Gastrocnemius medialis (tissue), 4 donors: ENCODE measurements at regions of chr16 and their contacts with region 1.

Region 1: GRCh38 chr16:49811644-49812334 is 44.1 kb downstream of the ZNF423 start:
- DNase-seq: peak; percentile 52 to 83
- ATAC-seq: peak; percentile 83 to 85
- H3K4me3 ChIP-seq: peak overlapping the region in 1 of 4 donors; percentile 24
- H3K27ac ChIP-seq: peak overlapping the region; percentile 69 to 97 (median 80)
- H3K4me1 ChIP-seq: peaks cover 64 to 73% of the 10 kb centered on the region in 2 donors
- H3K27me3 ChIP-seq: no peaks in the 10 kb centered on the region
- CTCF ChIP-seq: no peak
- POLR2A ChIP-seq: peak in 1 of 2 donors; percentile 21

Region 2: DNA sequence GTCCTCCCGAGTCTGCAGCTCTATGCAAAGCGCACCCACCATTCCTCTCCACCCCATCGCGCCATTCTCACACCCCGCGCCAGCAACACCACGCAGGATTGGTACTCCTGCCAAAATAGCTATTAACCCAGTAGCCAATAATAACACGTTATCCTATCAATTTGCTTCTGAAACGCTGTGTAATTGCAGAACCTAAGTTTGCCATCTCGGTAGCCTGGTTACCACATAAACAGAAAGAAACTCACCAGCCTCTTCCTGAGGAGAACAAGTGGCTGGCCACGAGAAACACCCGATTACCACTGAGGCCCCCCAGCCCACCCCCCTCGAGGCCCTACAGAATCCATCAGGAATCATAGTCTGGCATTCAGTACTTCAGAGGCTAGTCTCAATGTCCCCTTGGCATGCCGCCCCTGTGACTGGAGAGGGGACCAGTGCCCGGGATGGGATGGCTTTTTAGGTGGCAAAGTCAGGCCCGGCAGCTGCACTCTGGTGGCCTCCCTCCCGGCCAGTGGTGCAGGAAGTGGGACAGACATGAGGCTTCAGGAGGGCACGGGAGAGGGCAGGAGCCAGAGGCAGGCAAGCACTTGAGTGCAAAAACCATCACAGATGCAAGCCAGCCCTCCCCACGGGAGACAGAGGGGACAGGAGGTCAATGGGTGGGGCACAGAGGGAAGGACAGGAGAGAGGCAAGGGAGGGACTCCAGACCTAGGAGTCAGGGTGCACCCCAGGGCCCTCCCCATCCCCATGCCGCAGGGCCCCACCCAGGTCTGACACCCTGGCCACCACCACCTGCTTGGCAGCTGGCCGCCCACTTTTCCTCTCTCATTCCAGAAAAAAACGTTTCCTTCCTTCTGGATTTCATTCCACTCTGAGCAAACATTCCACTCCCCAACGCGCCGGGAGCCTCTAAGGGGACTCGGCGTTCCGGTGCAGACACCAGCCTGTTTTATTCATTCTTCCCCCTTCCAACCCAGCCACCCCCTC is 148.4 kb before region 1 on chr16:
- in situ Hi-C with region 1: no loop called
- intact Hi-C with region 1: loop called (anchors 5 kb)
- DNase-seq: peak in 1 of 2 donors; percentile 31
- ATAC-seq: no peak
- H3K4me3 ChIP-seq: peak overlapping the region; percentile 12 to 26 (median 18)
- H3K27ac ChIP-seq: peak overlapping the region; percentile 47 to 75 (median 62)
- H3K4me1 ChIP-seq: peaks cover 35 to 36% of the 10 kb centered on the region in 2 donors
- H3K27me3 ChIP-seq: no peaks in the 10 kb centered on the region
- CTCF ChIP-seq: no peak
- POLR2A ChIP-seq: no peak

Region 3: GRCh38 chr16:49899991-49900695 is 88.4 kb after region 1 on chr16:
- in situ Hi-C with region 1: no loop called
- intact Hi-C with region 1: no loop called
- DNase-seq: no peak
- ATAC-seq: no peak
- H3K4me3 ChIP-seq: no peak overlapping the region
- H3K27ac ChIP-seq: no peak overlapping the region
- H3K4me1 ChIP-seq: no peaks in the 10 kb centered on the region
- H3K27me3 ChIP-seq: peaks cover 0 to 4% (median 0%) of the 10 kb centered on the region in 3 donors
- CTCF ChIP-seq: no peak
- POLR2A ChIP-seq: no peak